ENCODE measurements at regions of chr5 and their contacts with region 1.

Region 1: DNA sequence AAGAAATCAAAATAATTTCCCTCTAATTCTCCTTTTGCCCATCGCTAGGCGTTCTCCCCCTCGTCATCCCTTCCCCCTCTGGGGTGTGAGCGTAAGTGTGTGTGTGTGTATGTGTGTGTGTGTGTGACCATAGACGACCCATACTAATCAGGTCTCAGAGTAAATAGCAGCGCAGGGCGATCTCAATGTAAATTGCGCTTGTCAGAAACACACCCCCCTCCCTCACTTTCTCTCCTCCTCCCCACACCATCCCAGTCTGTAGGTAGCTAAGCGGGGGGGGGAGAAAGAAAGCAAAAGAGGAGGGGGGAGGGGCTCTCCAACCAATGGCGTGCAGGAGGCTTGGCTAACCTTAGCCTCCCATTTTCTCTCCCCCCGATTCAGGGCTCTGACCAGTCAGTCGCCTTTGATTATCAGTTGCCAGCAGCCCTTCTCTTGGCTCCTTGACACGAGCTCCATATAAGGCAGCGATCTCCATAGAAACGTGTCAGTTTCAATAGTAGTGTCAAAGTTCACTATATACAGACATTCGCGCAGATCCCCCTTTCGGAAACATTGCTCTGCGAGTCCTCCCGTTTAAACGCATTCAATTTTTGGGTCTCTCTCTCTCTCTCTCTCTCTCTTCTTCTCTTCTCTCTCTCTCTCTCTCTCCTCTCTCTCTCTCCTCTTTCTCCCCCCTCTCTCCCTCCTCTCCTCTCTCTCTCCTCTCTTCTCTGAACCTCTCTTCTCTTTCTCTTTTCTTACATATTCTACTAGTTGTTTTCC is at the start of gene NR2F1:
- DNase-seq: peak; percentile 98
- ATAC-seq: peak; percentile 50
- H3K4me3 ChIP-seq: peak within 1 kb of the TSS; percentile 86
- H3K27ac ChIP-seq: peak within 1 kb of the TSS; percentile 70
- H3K4me1 ChIP-seq: peaks cover 20% of the 10 kb centered on the region
- H3K27me3 ChIP-seq: no peaks in the 10 kb centered on the region
- CTCF ChIP-seq: no peak
- total RNA-seq, gene NR2F1: 88.4 and 118 TPM in 2 replicates

Region 2: GRCh38 chr5:92916036-92916435 is 666.8 kb before region 1 on chr5:
- CTCF ChIA-PET with region 1: no interaction called
- POLR2A ChIA-PET with region 1: interaction called, 3 read pairs
- intact Hi-C with region 1: loop called (anchors 10 kb)
- DNase-seq: peak; percentile 56
- ATAC-seq: no peak
- H3K4me3 ChIP-seq: no peak overlapping the region
- H3K27ac ChIP-seq: no peak overlapping the region
- H3K4me1 ChIP-seq: peaks cover 13% of the 10 kb centered on the region; the same call in 1 of the 2 replicates
- H3K27me3 ChIP-seq: no peaks in the 10 kb centered on the region
- CTCF ChIP-seq: peak; percentile 63; the same call in 1 of the 2 replicates

Region 3: DNA sequence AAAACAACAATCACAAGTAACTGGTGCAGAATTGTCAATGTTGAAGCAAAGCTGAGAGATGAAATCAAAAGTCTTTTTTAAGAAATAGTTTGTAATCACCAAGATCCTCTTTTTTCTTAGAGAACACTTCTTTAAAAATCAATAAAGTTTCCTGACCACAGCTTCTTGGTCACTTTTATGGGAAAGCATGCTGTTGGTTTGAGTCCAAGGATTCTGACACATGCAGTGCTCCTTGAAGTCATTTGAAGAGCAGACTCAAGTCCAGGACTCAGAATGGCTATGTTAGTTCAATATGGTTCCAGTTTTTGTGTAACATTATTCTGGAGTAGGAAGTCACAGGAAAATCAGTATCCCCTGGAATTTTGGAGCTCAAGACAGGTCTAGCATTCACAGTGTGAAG is 482.4 kb before region 1 on chr5:
- CTCF ChIA-PET with region 1: no interaction called
- POLR2A ChIA-PET with region 1: no interaction called
- intact Hi-C with region 1: loop called (anchors 2 kb)
- DNase-seq: peak; percentile 85
- ATAC-seq: peak; percentile 77
- H3K4me3 ChIP-seq: no peak overlapping the region
- H3K27ac ChIP-seq: peak overlapping the region; percentile 64
- H3K4me1 ChIP-seq: peaks cover 20% of the 10 kb centered on the region
- H3K27me3 ChIP-seq: no peaks in the 10 kb centered on the region
- CTCF ChIP-seq: no peak

Region 4: DNA sequence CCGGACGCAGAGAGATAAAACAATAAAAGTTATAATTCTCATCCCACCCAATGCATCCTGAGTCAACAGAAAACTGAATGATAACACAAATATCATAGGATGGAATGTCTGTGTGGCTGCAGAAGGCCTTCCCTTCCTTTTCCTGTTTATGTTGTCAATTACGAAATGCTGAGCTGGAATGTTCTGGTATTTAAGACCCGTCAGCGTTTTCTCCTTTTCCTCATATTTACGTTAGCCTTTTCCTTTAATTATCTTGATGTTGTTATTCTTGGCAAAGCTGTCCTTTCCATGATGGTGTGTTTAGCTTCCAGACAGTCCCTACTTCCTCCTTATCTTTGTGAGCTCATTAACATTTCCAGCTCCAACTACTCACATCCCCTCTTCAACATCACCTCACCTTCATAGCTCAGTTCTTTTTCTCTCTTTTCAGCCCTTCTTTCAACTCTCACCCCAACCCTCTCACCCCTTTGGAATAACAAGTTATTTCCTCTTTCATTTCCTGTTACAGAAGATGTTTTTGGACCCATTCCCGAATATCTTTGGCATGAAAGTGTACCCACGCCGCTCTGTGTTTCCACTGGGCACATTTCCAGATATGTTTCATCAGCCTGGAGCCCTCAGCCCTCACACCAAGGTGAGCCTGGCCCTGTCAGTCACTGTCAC is 223.4 kb before region 1 on chr5:
- CTCF ChIA-PET with region 1: interaction called, 10 read pairs
- POLR2A ChIA-PET with region 1: interaction called, 4 read pairs
- intact Hi-C with region 1: loop called (anchors 2 kb)
- DNase-seq: peak; percentile 98
- ATAC-seq: peak; percentile 58
- H3K4me3 ChIP-seq: peak overlapping the region; percentile 40
- H3K27ac ChIP-seq: peak overlapping the region; percentile 78
- H3K4me1 ChIP-seq: peaks cover 58% of the 10 kb centered on the region
- H3K27me3 ChIP-seq: no peaks in the 10 kb centered on the region
- CTCF ChIP-seq: no peak

Region 5: DNA sequence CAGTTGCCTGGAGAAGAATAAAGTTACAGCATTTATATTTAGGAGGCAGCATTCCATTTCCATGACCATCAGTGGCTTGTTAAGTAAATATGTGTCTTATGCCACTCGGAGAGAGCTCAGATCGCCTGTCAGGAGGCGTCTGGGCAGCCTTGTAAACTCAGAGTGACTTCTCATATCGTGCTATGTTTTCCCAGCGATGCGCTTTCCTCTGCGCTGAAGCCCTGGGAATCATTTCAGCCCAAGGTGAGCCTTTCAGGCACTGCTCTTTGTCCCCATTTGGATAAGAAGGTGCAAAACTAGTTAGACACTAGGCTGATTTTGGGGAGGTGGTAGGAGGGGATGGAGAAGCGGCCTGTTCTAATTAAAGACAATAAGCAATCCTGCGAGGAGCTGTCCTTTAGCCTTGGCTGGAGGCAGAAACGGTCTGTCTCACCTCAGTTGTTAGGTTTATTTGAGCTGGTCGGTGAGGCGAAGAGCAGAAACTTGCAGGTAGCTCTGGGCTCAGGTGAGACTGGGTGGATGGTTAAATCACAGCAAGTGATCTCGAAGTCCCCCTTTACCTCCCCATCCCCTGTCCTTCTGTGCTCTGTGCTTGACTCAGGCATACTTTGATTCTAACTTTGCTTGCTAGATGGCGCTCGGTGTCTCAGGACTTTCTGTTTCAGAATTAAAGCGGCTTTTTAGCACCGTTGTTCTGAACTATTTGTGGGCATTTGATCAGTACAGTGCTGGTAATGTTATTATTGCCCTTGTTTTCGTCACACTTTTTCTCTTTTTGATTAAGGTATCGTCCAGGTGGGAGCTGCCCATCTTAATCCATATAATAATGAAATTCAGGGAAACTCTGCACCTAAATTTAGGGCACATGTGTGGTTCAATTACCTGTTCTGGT is 24.8 kb after region 1 on chr5:
- CTCF ChIA-PET with region 1: interaction called, 15 read pairs
- POLR2A ChIA-PET with region 1: interaction called, 7 read pairs
- intact Hi-C with region 1: loop called (anchors 2 kb)
- DNase-seq: peak; percentile 94
- ATAC-seq: peak; percentile 94
- H3K4me3 ChIP-seq: peak overlapping the region; percentile 70
- H3K27ac ChIP-seq: peak overlapping the region; percentile 50
- H3K4me1 ChIP-seq: peaks cover 32% of the 10 kb centered on the region
- H3K27me3 ChIP-seq: peaks cover 25% of the 10 kb centered on the region
- CTCF ChIP-seq: peak; percentile 90

Region 6: GRCh38 chr5:93915142-93915553 is 332.3 kb after region 1 on chr5:
- CTCF ChIA-PET with region 1: no interaction called
- POLR2A ChIA-PET with region 1: no interaction called
- intact Hi-C with region 1: loop called (anchors 1 kb)
- DNase-seq: peak; percentile 77
- ATAC-seq: peak; percentile 49; the same call in 1 of the 2 replicates
- H3K4me3 ChIP-seq: no peak overlapping the region
- H3K27ac ChIP-seq: no peak overlapping the region
- H3K4me1 ChIP-seq: no peaks in the 10 kb centered on the region
- H3K27me3 ChIP-seq: no peaks in the 10 kb centered on the region
- CTCF ChIP-seq: peak; percentile 77